K562 (cell line): ENCODE measurements at regions of chr9 and their contacts with region 1.

Region 1: DNA sequence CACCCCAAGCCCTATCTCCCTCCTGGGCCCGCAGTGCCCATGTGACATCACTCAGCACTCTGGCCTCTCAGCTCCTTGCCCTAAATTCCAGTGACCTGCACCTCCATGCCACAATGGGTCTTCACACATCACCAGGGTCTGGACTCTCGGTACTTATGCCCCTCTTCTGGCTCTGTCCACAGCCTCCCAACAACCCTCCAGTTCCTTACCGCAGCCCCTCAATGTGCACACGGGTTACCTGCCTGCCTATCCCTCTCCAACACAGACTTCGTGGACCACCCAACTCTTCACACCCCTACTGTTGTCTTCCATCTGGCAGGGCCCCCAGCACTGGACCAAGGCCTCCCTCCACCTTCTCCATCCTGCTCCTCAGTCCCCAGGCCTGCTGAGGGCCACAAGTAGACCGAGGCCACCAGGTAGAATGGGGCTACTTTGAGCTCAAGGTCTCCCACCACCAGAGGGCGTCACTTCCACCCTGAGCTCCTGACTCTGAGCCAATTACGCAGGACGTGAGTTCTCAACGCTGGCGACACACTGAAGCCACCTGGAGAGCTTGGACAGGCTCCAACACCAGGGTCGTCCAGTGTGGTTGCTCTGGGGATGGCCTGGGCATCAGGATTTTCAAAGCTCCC is 172.1 kb downstream of the GABBR2 start:
- DNase-seq: peak; percentile 50 to 82 (median 62)
- ATAC-seq: peak; percentile 94
- H3K4me3 ChIP-seq: no peak overlapping the region
- H3K27ac ChIP-seq: no peak overlapping the region
- H3K4me1 ChIP-seq: peaks cover 2 to 3% of the 10 kb centered on the region in 2 experiments; a peak in 2 of 5 replicates
- H3K27me3 ChIP-seq: no peaks in the 10 kb centered on the region; a peak in 1 of 5 replicates
- CTCF ChIP-seq: peak; percentile 72 to 88 (median 77)
- EP300 ChIP-seq: no peak
- POLR2A ChIP-seq: no peak
- RAD21 ChIP-seq: peak; percentile 58 to 84; a peak in 3 of 4 replicates

Region 2: DNA sequence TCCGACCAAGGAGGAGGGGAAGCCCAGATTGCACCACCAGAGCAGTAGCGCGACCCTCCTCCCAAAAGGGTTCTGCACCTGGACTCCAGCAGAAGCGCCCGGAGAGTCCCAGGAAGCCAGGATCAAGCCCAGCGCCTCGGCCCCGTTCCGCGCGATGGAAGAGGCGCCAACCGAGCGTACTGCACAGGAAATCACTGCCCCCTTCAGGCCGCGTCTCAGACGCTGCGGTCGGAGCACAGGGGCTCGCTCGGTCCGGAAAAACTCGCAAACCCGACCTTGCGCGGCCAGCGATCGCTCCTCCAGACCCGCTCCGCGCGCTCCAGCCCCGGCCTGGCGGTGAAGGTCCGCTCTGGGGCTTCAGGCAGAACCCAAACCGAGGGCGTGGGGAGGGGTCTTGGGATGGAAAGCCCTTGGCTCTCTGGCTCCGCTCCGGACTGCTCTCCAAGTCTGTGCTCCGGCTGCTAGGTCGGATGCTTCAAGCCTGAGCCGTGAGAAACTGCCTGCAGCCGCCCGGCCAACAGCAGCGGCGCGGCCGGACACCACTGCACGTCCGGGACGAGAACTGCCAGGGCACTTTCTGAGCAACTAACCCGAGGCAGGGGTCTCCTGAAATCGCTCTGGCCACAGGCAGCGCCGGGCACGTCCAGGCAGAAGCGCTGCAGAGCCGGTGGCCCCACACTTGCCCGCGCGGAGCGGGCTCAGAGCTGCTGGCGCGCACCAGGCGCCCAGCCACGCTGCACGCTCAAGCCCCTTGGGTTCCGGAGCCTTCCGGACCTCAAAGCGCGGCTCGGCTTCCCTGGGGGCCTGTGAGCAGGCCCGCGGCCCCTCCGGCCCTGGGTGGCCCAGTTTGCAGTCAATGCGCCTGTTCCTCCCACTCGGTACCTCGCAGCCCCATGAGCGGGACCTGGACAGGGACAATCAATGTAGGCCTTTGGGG is 170.8 kb after region 1 on chr9:
- CTCF ChIA-PET with region 1: no interaction called
- POLR2A ChIA-PET with region 1: interaction called, 5 read pairs
- in situ Hi-C with region 1: no loop called
- intact Hi-C with region 1: loop called (anchors 2 kb)
- DNase-seq: peak; percentile 51 to 83 (median 62)
- ATAC-seq: peak; percentile 93
- H3K4me3 ChIP-seq: no peak overlapping the region
- H3K27ac ChIP-seq: no peak overlapping the region
- H3K4me1 ChIP-seq: peaks cover 0 to 31% of the 10 kb centered on the region in 2 experiments; a peak in 3 of 5 replicates
- H3K27me3 ChIP-seq: peaks cover 17 to 51% of the 10 kb centered on the region in 2 experiments
- CTCF ChIP-seq: peak; percentile 69 to 80 (median 74)
- EP300 ChIP-seq: no peak
- POLR2A ChIP-seq: no peak
- RAD21 ChIP-seq: peak; percentile 64 to 84

Region 3: GRCh38 chr9:98775831-98776441 is 239.3 kb after region 1 on chr9:
- CTCF ChIA-PET with region 1: interaction called, 3 read pairs
- POLR2A ChIA-PET with region 1: no interaction called
- in situ Hi-C with region 1: no loop called
- intact Hi-C with region 1: loop called (anchors 5 kb)
- DNase-seq: peak; percentile 80 to 81 (median 80)
- ATAC-seq: peak; percentile 93
- H3K4me3 ChIP-seq: no peak overlapping the region
- H3K27ac ChIP-seq: no peak overlapping the region
- H3K4me1 ChIP-seq: peaks cover 0 to 3% of the 10 kb centered on the region in 2 experiments; a peak in 1 of 5 replicates
- H3K27me3 ChIP-seq: no peaks in the 10 kb centered on the region
- CTCF ChIP-seq: peak; percentile 76 to 81 (median 81)
- EP300 ChIP-seq: no peak
- POLR2A ChIP-seq: no peak
- RAD21 ChIP-seq: peak; percentile 68 to 79